RWPE1 (cell line): ENCODE measurements at regions of chr5 and their contacts with region 1.

Region 1: GRCh38 chr5:53151713-53152458 is 42.3 kb upstream of the MOCS2 start:
- DNase-seq: no peak
- H3K27ac ChIP-seq: no peak overlapping the region
- CTCF ChIP-seq: no peak

Region 2: GRCh38 chr5:52956915-52957747 is 194.8 kb before region 1 on chr5:
- CTCF ChIA-PET with region 1: interaction called, 10 read pairs
- POLR2A ChIA-PET with region 1: no interaction called
- DNase-seq: no peak
- H3K27ac ChIP-seq: no peak overlapping the region
- CTCF ChIP-seq: no peak

Region 3: GRCh38 chr5:53194086-53194485 is 42.2 kb after region 1 on chr5:
- CTCF ChIA-PET with region 1: no interaction called
- POLR2A ChIA-PET with region 1: no interaction called
- DNase-seq: no peak
- H3K27ac ChIP-seq: no peak overlapping the region
- CTCF ChIP-seq: no peak